H1 (cell line): ENCODE measurements at regions of chr11 and their contacts with region 1.

Region 1: GRCh38 chr11:73453562-73453961 is 77.4 kb downstream of the RELT start:
- DNase-seq: no peak
- H3K4me3 ChIP-seq: no peak overlapping the region
- H3K27ac ChIP-seq: no peak overlapping the region
- H3K4me1 ChIP-seq: peaks cover 0 to 2% (median 0%) of the 10 kb centered on the region in 4 experiments; a peak in 3 of 7 replicates
- H3K27me3 ChIP-seq: no peaks in the 10 kb centered on the region
- CTCF ChIP-seq: no peak
- EP300 ChIP-seq: no peak
- POLR2A ChIP-seq: no peak
- RAD21 ChIP-seq: no peak

Region 2: DNA sequence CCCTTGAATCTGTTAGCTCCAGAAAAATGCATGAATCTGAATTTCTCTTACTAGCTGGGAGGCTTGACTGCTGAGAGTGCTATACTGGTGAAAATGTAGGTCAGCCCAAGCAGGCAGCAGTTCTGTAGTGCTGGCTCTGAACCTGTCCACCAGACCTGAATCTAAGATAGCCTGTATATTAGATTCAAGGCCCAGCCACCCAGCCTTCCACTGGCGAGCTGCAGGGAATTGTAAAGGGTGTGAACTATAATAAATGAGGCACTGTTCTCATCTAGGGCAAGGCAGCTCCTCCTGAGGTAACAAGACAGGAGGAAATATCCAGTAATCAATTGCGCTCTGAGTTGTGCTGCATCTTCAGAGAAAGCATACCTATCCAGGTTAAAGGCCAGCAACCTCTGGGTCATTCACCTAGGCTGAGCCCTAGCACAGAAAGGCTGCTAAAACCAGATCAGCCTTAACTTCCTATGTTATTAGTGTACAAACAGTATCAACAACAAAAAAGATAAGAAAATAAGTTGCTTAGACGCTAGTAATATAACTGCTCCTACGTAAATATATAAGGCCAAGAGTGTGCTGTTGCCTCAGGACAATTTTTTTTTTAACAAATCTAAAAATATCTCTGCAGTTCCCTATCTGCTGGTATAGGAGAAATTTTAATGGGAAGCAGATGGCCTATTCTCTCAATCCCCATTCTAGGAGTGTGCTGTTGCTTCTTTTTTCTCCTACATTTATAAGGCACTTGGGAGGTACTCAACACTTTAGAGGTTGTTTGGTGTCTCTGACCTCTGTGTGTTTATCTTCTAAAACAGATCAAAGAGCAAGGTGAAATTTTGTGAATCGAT is 14.3 kb before region 1 on chr11:
- CTCF ChIA-PET with region 1: interaction called, 15 read pairs
- POLR2A ChIA-PET with region 1: no interaction called
- DNase-seq: no peak
- H3K4me3 ChIP-seq: no peak overlapping the region
- H3K27ac ChIP-seq: no peak overlapping the region
- H3K4me1 ChIP-seq: peaks cover 2 to 4% (median 3%) of the 10 kb centered on the region in 4 experiments; a peak in 3 of 7 replicates
- H3K27me3 ChIP-seq: no peaks in the 10 kb centered on the region
- CTCF ChIP-seq: no peak
- EP300 ChIP-seq: no peak
- POLR2A ChIP-seq: no peak
- RAD21 ChIP-seq: no peak

Region 3: DNA sequence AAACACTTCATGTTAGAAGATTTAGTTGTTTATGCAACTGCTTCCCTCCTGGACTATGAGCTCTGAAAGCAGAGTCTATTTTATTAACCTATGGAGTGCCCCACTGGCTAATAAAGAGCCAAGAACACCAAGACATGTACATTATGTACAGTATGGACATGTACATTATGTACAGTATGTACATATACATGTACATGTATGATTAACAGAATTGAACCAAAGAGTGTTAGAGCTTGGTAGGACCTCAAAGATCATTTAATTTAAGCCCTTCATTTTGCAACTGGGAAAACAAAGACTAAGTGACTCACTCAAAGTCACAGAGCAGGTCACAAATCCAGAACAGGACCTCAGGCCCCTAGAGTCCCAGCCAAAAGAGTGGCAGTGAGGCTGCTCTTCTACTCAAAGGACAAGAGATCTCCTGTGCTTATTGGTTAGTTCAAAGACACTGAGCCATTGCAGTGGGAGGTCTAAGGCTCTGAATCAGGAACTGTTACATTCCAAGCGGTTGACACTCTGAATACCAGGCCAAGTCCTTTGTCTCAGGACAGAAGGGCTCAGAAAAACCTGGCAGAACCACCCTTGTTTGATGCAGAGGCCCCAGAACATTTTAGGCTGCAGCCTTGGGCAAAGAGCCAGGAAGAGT is 40.5 kb after region 1 on chr11:
- CTCF ChIA-PET with region 1: no interaction called
- POLR2A ChIA-PET with region 1: no interaction called
- DNase-seq: peak; percentile 46
- H3K4me3 ChIP-seq: no peak overlapping the region
- H3K27ac ChIP-seq: 0 out of 2 replicates have a peak overlapping the region, but pooled peaks have one; percentile 21
- H3K4me1 ChIP-seq: peaks cover 0 to 8% (median 3%) of the 10 kb centered on the region in 4 experiments; a peak in 4 of 7 replicates
- H3K27me3 ChIP-seq: no peaks in the 10 kb centered on the region
- CTCF ChIP-seq: no peak
- EP300 ChIP-seq: no peak
- POLR2A ChIP-seq: no peak
- RAD21 ChIP-seq: no peak